Esophagus squamous epithelium (tissue), 5 donors: ENCODE measurements at regions of chr20 and their contacts with region 1.

Region 1: GRCh38 chr20:17536944-17537444 is 5.8 kb upstream of the BFSP1 start:
- DNase-seq: no peak
- H3K4me3 ChIP-seq: no peak overlapping the region
- H3K27ac ChIP-seq: peak overlapping the region in 2 of 4 donors; percentile 19 to 46
- H3K4me1 ChIP-seq: peaks cover 0 to 44% (median 11%) of the 10 kb centered on the region in 3 donors
- H3K27me3 ChIP-seq: no peaks in the 10 kb centered on the region
- CTCF ChIP-seq: peak; percentile 84 to 97 (median 91)
- POLR2A ChIP-seq: no peak

Region 2: DNA sequence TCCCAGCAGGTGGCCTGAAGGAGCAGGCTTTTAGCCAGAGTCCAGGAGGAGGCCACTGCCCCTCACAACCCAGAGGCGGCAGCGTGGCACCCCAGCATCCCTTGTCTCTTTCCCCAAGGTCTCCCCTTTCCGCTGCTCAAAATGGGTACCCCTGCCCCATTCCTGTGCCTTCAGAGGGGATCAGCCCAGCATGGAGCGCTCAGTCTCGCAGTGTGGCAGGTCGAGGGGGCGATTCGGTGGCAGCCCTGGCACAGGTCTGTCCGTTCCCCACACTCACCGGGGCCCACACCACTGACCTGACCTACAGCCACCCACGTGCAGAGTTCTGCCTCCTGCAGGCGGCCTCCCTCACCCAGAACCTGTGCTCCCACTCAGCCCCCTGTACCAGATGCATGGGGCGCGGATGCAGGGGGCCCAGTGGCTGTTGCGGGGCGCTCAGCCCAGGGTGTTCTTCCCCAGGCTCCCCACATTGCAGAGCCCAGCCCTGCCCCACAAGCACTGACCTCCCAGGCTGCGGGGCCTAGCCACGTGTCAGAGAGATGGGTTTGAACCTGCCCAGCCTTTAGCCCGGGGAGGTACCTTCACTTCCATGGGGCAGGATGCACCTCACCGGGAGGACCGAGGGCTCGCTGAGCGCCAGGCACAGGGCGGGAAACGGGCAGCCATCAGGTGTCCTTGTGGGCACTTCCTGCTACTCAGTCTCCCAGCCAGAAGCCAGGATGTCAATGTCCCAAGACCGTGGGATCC is 74.7 kb after region 1 on chr20:
- intact Hi-C with region 1: loop called (anchors 5 kb)
- DNase-seq: no peak
- H3K4me3 ChIP-seq: no peak overlapping the region
- H3K27ac ChIP-seq: peak overlapping the region; percentile 32 to 83 (median 80)
- H3K4me1 ChIP-seq: peaks cover 40 to 78% (median 52%) of the 10 kb centered on the region in 3 donors
- H3K27me3 ChIP-seq: no peaks in the 10 kb centered on the region
- CTCF ChIP-seq: peak in 4 of 6 experiments; percentile 7 to 60 (median 52)
- POLR2A ChIP-seq: no peak

Region 3: DNA sequence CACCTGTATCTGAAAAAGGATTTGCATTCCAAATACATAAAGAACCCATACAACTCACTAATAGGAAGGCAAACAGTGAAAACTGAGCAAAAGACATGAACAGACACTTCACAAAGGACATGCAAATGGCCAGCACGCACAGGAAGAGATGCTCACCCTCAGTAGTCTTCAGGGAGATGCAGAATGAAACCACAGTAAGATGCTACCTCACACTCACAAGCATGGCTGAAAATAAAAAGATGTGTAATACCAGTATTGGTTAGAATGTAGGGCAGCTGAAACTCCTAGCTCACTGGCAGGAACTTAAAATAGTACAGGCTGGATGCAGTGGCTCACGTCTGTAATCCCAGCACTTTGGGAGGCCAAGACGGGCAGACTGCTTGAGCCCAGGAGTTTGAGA is 367.0 kb after region 1 on chr20:
- intact Hi-C with region 1: loop called (anchors 10 kb)
- DNase-seq: no peak
- H3K4me3 ChIP-seq: no peak overlapping the region
- H3K27ac ChIP-seq: no peak overlapping the region
- H3K4me1 ChIP-seq: no peaks in the 10 kb centered on the region
- H3K27me3 ChIP-seq: peaks cover 0 to 4% (median 0%) of the 10 kb centered on the region in 4 donors
- CTCF ChIP-seq: no peak
- POLR2A ChIP-seq: no peak